Tibial artery (tissue), 4 donors: ENCODE measurements at regions of chr10 and their contacts with region 1.

Region 1: GRCh38 chr10:131418676-131419075 is 107.2 kb upstream of the TCERG1L start:
- DNase-seq: no peak
- H3K4me3 ChIP-seq: no peak overlapping the region
- H3K27ac ChIP-seq: no peak overlapping the region
- H3K4me1 ChIP-seq: no peaks in the 10 kb centered on the region
- H3K27me3 ChIP-seq: no peaks in the 10 kb centered on the region
- CTCF ChIP-seq: no peak

Region 2: GRCh38 chr10:131126351-131127123 is 292.1 kb before region 1 on chr10:
- intact Hi-C with region 1: no loop called
- DNase-seq: no peak
- H3K4me3 ChIP-seq: no peak overlapping the region
- H3K27ac ChIP-seq: no peak overlapping the region
- H3K4me1 ChIP-seq: no peaks in the 10 kb centered on the region
- H3K27me3 ChIP-seq: peaks cover 0 to 16% of the 10 kb centered on the region in 2 donors
- CTCF ChIP-seq: no peak

Region 3: DNA sequence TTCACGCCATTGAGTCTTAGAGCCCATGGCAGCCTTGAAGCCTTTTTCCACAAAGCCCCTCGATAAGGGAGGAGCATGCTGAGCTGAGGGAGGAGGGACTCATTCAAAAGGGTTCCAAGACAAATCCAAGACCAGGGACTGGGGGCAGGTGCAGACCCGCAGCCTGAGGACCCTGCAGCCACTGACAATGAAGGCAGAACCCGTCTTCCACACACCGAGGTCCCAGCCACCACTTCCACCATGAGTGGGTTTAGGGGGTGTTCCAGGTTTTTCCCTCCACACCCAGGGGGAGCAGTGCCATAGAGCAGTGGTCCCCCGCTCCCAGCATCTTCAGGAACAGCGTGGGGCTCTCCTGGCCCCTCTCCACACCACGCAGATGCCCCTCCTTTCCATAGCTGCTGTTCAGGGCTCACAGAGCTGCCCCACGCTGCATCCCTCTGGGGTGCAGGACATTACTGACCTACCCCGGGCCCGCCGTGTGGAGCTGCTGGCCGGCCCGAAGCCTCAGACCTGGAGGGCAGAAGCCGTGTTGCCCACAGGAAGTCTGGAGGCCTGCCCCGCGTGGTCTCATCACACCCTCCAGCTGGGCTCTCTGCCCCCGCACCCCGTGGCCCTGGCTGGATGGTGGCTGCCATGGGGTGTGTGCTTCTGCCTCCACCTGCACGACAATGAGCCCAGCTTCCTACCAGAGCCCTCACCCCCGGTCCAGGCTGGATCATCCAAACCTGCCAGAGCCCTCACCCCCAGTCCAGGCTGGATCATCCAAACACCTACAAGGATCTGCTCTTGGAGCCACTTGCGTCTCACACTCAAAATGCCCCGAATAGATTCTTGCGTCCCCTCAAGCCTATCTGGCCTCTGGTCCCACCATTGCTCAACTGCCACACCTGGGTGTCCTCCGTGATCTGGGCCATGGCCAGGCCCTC is 112.9 kb after region 1 on chr10:
- intact Hi-C with region 1: no loop called
- DNase-seq: no peak
- H3K4me3 ChIP-seq: no peak overlapping the region
- H3K27ac ChIP-seq: no peak overlapping the region
- H3K4me1 ChIP-seq: no peaks in the 10 kb centered on the region
- H3K27me3 ChIP-seq: no peaks in the 10 kb centered on the region
- CTCF ChIP-seq: no peak

Region 4: GRCh38 chr10:131617113-131617858 is 198.6 kb after region 1 on chr10:
- intact Hi-C with region 1: loop called (anchors 5 kb)
- DNase-seq: peak in 1 of 2 donors; percentile 16
- H3K4me3 ChIP-seq: no peak overlapping the region
- H3K27ac ChIP-seq: no peak overlapping the region
- H3K4me1 ChIP-seq: no peaks in the 10 kb centered on the region
- H3K27me3 ChIP-seq: peaks cover 0 to 6% of the 10 kb centered on the region in 2 donors
- CTCF ChIP-seq: no peak